ENCODE measurements at regions of chr15 and their contacts with region 1.

Region 1: DNA sequence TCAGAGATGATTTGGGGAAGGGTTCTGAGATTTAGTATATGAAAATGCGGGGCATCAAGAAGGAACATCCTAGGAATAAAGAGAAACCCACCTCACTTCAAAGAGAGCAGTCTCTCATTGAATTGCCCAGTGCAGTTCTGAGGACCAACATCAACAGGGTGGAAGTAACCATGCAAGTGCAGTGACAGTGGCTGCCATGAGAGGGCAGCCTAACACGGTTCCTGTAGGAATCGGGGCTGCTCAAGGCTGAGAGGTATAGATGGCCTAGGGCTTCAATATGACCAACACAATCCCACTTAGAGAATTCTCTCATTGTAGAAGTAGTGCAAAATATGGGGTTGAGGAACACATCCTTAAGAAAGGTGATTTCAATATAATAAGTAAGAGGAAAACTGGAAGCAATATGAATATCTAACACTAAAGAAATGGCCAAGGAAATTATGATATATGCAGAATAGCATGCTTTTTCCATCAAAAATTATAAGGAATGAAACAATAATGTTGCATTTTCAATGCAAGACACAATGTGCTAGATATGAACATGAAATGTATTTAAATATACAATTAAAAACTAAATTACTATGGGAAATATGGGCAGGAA is 51.1 kb upstream of the ARRDC4 start:
- ATAC-seq: peak; percentile 83 to 98 (median 95)
- H3K4me3 ChIP-seq: no peak overlapping the region
- H3K27ac ChIP-seq: no peak overlapping the region
- H3K4me1 ChIP-seq: peaks cover 3% of the 10 kb centered on the region in 2 donors

Region 2: DNA sequence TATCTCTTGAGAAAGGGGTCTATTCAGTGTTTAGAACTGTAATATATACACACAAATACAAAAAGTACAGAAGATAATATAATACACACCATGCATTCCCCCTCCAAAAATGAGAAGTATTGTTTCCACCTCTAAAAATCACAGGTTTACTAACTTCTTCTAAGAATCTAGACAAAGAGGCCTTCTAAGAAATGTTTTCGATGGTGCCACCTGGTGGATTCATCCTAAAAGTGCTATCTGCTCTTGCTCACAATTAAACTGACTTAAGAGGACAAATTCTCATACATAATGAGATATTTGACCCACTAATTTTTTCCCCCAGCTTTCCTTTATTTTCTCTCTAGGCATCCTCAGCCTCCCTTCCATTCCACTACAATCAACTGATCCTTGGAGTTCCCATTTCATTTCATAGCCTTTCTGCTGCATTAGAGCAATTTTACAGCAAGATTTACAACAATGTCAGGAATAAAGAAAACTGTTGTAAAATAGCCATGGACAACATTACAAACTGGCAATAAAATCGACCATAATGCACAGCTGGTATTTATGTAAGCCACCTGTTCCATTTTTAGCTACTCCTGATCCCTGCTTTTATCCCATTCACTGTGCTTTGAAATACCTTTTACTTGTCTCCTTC is 175.7 kb after region 1 on chr15:
- in situ Hi-C with region 1: loop called in 7 of 9 experiments (anchors 10 to 25 kb)
- ATAC-seq: peak in 3 of 8 experiments; percentile 29 to 39 (median 35)
- H3K4me3 ChIP-seq: no peak overlapping the region
- H3K27ac ChIP-seq: no peak overlapping the region
- H3K4me1 ChIP-seq: peaks cover 0 to 3% of the 10 kb centered on the region in 2 donors

Region 3: DNA sequence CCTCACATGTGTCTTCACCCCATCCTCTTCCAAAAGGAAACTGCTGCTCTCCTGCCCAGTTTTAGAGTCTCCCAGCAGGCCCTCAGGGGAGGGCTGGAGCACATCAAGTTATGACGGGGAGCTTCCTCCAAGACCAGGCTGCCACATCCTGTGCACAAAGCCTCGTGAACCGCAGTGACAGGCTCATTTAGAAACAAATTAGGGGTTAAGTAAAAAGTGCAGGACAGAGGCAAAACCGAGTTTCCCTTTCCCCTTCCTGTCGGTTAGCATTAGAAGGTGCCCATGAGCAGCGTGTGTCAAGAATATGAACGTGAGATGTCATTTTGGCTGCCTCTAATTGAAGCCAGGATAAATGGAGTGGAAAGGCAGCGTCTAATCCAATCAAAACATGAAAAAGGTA is 250.8 kb after region 1 on chr15:
- in situ Hi-C with region 1: loop called in 1 of 9 experiments (anchors 25 kb)
- ATAC-seq: no peak
- H3K4me3 ChIP-seq: no peak overlapping the region
- H3K27ac ChIP-seq: no peak overlapping the region
- H3K4me1 ChIP-seq: no peaks in the 10 kb centered on the region

Region 4: GRCh38 chr15:98177924-98178592 is 268.7 kb after region 1 on chr15:
- in situ Hi-C with region 1: loop called in 4 of 9 experiments (anchors 10 to 25 kb)
- ATAC-seq: peak; percentile 84 to 100 (median 94)
- H3K4me3 ChIP-seq: no peak overlapping the region
- H3K27ac ChIP-seq: no peak overlapping the region
- H3K4me1 ChIP-seq: peaks cover 4 to 6% of the 10 kb centered on the region in 2 donors

Region 5: GRCh38 chr15:98257290-98257689 is 347.9 kb after region 1 on chr15:
- in situ Hi-C with region 1: no loop called
- ATAC-seq: no peak
- H3K4me3 ChIP-seq: no peak overlapping the region
- H3K27ac ChIP-seq: no peak overlapping the region
- H3K4me1 ChIP-seq: peaks cover 0 to 2% of the 10 kb centered on the region in 2 donors

Region 6: GRCh38 chr15:98292442-98293240 is 383.2 kb after region 1 on chr15:
- in situ Hi-C with region 1: loop called in 1 of 9 experiments (anchors 25 kb)
- ATAC-seq: peak; percentile 43 to 97 (median 66)
- H3K4me3 ChIP-seq: peak overlapping the region; percentile 4 to 28 (median 14)
- H3K27ac ChIP-seq: no peak overlapping the region
- H3K4me1 ChIP-seq: peaks cover 6% of the 10 kb centered on the region in 2 donors

Region 7: GRCh38 chr15:98311566-98312188 is 402.3 kb after region 1 on chr15:
- in situ Hi-C with region 1: no loop called
- ATAC-seq: peak in 3 of 8 experiments; percentile 56 to 70 (median 57)
- H3K4me3 ChIP-seq: no peak overlapping the region
- H3K27ac ChIP-seq: no peak overlapping the region
- H3K4me1 ChIP-seq: no peaks in the 10 kb centered on the region

Region 8: DNA sequence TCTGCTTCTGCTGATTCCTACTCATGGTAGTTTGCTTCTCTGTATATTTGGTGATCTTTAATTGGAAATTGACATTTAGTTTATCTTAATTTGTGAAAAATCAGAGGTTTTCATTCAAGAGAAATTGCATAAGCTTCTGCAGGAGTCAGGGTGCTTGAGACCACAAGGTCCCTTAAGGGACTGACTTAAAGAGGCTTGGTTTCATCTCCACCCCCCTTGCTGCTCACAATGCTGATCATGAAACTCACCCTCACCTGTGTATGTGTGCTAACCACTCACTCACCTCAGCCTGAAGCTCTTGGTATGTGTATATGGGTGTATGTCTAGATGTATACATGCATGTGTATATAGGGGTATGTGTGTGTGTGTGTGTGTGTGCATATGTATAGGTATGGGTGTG is 1086.8 kb after region 1 on chr15:
- in situ Hi-C with region 1: no loop called
- ATAC-seq: no peak
- H3K4me3 ChIP-seq: no peak overlapping the region
- H3K27ac ChIP-seq: no peak overlapping the region
- H3K4me1 ChIP-seq: no peaks in the 10 kb centered on the region